CD4-positive, alpha-beta memory T cell (primary cell): ENCODE measurements at regions of chr1 and their contacts with region 1.

Region 1: GRCh38 chr1:116881879-116882520 is 27.7 kb upstream of the PTGFRN start:
- DNase-seq: peak in 2 of 5 donors; percentile 5 to 20
- H3K4me3 ChIP-seq: no peak overlapping the region
- H3K4me3 Mint-ChIP-seq: no peak overlapping the region
- H3K27ac ChIP-seq: no peak overlapping the region
- H3K27ac Mint-ChIP-seq: peak overlapping the region in 1 of 7 donors; percentile 28
- H3K4me1 ChIP-seq: peaks cover 28% of the 10 kb centered on the region
- H3K4me1 Mint-ChIP-seq: peaks cover 0 to 5% (median 2%) of the 10 kb centered on the region in 4 donors
- H3K27me3 ChIP-seq: no peaks in the 10 kb centered on the region
- H3K27me3 Mint-ChIP-seq: no peaks in the 10 kb centered on the region

Region 2: DNA sequence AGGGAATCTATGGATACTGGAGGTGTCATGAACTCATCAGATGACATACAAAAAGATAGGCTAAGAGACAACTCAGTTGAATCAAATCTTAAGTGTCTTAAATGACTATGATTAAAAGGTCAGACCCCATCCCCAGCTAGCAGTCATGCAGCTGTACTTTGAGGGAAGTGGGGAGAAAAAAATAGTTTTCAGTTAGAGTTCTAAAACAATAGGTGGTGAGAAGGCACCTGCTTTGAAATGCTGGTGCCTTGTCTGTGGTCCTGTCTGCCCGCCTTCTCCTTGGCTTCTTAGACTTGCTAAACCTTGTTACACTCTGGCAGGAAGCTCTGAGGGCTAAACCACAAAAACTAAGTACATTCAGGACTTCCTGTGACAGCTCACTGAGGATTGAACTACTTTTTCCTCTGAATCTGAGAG is 112.4 kb before region 1 on chr1:
- CTCF ChIA-PET with region 1: interaction called, 3 read pairs
- POLR2A ChIA-PET with region 1: interaction called, 10 read pairs
- intact Hi-C with region 1: no loop called
- DNase-seq: peak; percentile 85 to 94 (median 89)
- H3K4me3 ChIP-seq: peak overlapping the region in 1 of 2 donors; percentile 24
- H3K4me3 Mint-ChIP-seq: peak overlapping the region; percentile 29 to 94 (median 74)
- H3K27ac ChIP-seq: peak overlapping the region; percentile 88
- H3K27ac Mint-ChIP-seq: peak overlapping the region; percentile 97 to 99 (median 98)
- H3K4me1 ChIP-seq: peaks cover 87% of the 10 kb centered on the region
- H3K4me1 Mint-ChIP-seq: peaks cover 75 to 91% (median 82%) of the 10 kb centered on the region in 4 donors
- H3K27me3 ChIP-seq: no peaks in the 10 kb centered on the region
- H3K27me3 Mint-ChIP-seq: no peaks in the 10 kb centered on the region

Region 3: GRCh38 chr1:116817582-116818064 is 64.4 kb before region 1 on chr1:
- CTCF ChIA-PET with region 1: interaction called, 7 read pairs
- POLR2A ChIA-PET with region 1: interaction called, 11 read pairs
- intact Hi-C with region 1: loop called (anchors 2 kb)
- DNase-seq: peak; percentile 67 to 77 (median 71)
- H3K4me3 ChIP-seq: no peak overlapping the region
- H3K4me3 Mint-ChIP-seq: peak overlapping the region in 7 of 8 donors; percentile 39 to 76 (median 60)
- H3K27ac ChIP-seq: no peak overlapping the region
- H3K27ac Mint-ChIP-seq: peak overlapping the region; percentile 79 to 96 (median 88)
- H3K4me1 ChIP-seq: peaks cover 36% of the 10 kb centered on the region
- H3K4me1 Mint-ChIP-seq: peaks cover 22 to 40% (median 29%) of the 10 kb centered on the region in 4 donors
- H3K27me3 ChIP-seq: no peaks in the 10 kb centered on the region
- H3K27me3 Mint-ChIP-seq: no peaks in the 10 kb centered on the region

Region 4: DNA sequence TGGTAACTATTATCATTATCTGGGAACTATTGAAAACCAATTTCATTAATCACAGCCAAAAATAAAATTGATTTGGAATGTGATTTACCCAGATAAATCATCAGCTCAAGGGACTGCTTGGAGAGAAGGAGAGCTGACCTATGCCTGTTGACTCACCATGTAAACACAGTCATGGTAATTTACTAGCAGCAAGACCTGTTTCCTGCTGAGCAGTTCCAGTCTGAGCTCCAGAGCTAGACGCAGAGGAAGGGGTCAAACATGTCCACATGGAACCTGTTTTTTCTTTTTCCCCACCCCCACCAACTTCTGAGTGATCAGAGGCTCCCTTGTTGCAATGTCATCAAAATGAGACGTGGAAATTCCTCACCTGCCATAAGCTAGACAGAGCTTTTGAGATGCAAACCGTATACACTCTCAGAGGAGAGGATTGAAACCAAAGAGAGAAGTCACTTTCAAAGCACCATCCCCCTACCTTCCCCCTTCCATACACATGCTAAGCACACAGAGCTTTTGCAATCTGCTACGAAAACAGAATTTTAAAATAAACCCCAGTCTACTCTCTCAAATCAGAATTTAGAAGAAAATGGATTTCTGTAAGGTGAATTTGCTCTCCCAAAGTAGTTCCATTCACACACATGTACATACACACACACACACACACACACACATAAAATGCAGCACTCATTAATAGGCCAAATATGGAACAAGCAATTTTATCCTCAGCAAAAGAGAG is 28.2 kb before region 1 on chr1:
- CTCF ChIA-PET with region 1: interaction called, 32 read pairs
- POLR2A ChIA-PET with region 1: interaction called, 24 read pairs
- intact Hi-C with region 1: no loop called
- DNase-seq: no peak
- H3K4me3 ChIP-seq: no peak overlapping the region
- H3K4me3 Mint-ChIP-seq: no peak overlapping the region
- H3K27ac ChIP-seq: no peak overlapping the region
- H3K27ac Mint-ChIP-seq: peak overlapping the region in 5 of 7 donors; percentile 8 to 85 (median 43)
- H3K4me1 ChIP-seq: peaks cover 4% of the 10 kb centered on the region
- H3K4me1 Mint-ChIP-seq: peaks cover 8 to 19% (median 15%) of the 10 kb centered on the region in 4 donors
- H3K27me3 ChIP-seq: no peaks in the 10 kb centered on the region
- H3K27me3 Mint-ChIP-seq: no peaks in the 10 kb centered on the region

Region 5: DNA sequence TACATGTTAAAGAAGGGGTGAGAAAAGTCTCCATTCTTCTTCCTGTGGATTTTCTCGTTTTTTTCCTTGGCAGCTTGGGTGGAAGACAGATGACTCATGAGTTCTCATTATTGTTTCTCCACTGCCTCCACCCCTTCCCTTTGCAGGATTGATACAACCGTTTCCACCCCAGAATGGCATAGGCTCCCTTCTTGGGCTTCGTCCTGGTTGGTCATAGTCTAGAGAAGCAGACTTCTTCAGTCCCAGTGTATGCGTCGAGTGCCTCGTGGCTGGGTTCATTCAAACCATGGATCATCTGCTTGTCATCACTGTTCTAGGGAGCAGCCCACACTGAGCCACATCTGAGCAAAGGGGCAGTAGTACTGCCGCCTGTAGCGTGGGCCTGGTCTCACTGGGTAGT is 41.4 kb after region 1 on chr1:
- CTCF ChIA-PET with region 1: no interaction called
- POLR2A ChIA-PET with region 1: no interaction called
- intact Hi-C with region 1: no loop called
- DNase-seq: no peak
- H3K4me3 ChIP-seq: no peak overlapping the region
- H3K4me3 Mint-ChIP-seq: no peak overlapping the region
- H3K27ac ChIP-seq: no peak overlapping the region
- H3K27ac Mint-ChIP-seq: no peak overlapping the region
- H3K4me1 ChIP-seq: no peaks in the 10 kb centered on the region
- H3K4me1 Mint-ChIP-seq: no peaks in the 10 kb centered on the region
- H3K27me3 ChIP-seq: no peaks in the 10 kb centered on the region
- H3K27me3 Mint-ChIP-seq: peaks cover 0 to 3% of the 10 kb centered on the region in 2 donors

Region 6: GRCh38 chr1:116987256-116987555 is 105.2 kb after region 1 on chr1:
- CTCF ChIA-PET with region 1: interaction called, 4 read pairs
- POLR2A ChIA-PET with region 1: interaction called, 11 read pairs
- intact Hi-C with region 1: no loop called
- DNase-seq: peak; percentile 64 to 78 (median 74)
- H3K4me3 ChIP-seq: peak overlapping the region; percentile 44 to 59
- H3K4me3 Mint-ChIP-seq: peak overlapping the region; percentile 83 to 94 (median 88)
- H3K27ac ChIP-seq: peak overlapping the region; percentile 51
- H3K27ac Mint-ChIP-seq: peak overlapping the region; percentile 74 to 98 (median 95)
- H3K4me1 ChIP-seq: peaks cover 34% of the 10 kb centered on the region
- H3K4me1 Mint-ChIP-seq: peaks cover 25 to 42% (median 31%) of the 10 kb centered on the region in 4 donors
- H3K27me3 ChIP-seq: no peaks in the 10 kb centered on the region
- H3K27me3 Mint-ChIP-seq: no peaks in the 10 kb centered on the region

Region 7: DNA sequence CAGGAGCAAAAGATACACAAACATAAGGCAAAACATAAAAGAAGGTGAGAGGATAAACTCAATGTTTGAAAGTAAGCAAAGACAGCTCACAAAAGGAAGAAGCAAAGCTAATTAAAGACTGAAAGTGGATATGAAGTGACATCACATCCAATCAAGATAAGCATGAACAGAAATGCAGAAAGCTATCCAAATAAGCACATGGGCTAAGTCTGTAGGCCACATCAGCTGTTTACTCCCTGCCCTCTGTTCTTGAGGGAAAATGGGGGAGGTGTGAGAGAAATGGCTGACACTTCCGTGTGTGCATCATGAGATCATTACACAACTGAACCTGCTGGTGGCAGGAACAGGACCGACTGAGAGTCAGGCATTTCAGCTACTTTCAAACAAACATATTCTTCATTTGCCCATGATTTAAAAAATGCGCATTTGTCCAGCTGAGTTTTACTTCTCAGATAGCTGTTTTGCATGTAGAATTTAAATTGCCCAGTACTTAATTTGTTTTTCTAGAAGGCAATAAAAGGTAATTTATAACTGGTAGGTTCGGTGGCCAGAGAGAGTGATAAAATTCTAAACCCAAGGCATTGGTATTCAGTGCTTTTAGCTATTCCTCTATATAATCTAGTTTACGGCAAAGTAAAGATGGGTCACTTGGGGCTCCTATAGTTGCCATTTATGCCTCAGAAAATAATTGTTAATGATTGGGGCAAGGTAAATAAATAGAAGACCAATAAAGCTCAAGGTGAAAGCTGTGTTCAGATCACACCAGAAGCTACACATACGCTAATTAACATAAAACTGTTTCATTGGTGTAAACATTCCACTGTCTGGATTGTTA is 458.1 kb after region 1 on chr1:
- CTCF ChIA-PET with region 1: no interaction called
- POLR2A ChIA-PET with region 1: no interaction called
- intact Hi-C with region 1: no loop called
- DNase-seq: peak; percentile 28 to 47 (median 42)
- H3K4me3 ChIP-seq: no peak overlapping the region
- H3K4me3 Mint-ChIP-seq: no peak overlapping the region
- H3K27ac ChIP-seq: no peak overlapping the region
- H3K27ac Mint-ChIP-seq: peak overlapping the region in 4 of 7 donors; percentile 3 to 24 (median 8)
- H3K4me1 ChIP-seq: peaks cover 16% of the 10 kb centered on the region
- H3K4me1 Mint-ChIP-seq: peaks cover 9 to 23% (median 15%) of the 10 kb centered on the region in 4 donors
- H3K27me3 ChIP-seq: no peaks in the 10 kb centered on the region
- H3K27me3 Mint-ChIP-seq: peaks cover 0 to under 1% of the 10 kb centered on the region in 2 donors